PC-9 (cell line): ENCODE measurements at regions of chr3 and their contacts with region 1.

Region 1: DNA sequence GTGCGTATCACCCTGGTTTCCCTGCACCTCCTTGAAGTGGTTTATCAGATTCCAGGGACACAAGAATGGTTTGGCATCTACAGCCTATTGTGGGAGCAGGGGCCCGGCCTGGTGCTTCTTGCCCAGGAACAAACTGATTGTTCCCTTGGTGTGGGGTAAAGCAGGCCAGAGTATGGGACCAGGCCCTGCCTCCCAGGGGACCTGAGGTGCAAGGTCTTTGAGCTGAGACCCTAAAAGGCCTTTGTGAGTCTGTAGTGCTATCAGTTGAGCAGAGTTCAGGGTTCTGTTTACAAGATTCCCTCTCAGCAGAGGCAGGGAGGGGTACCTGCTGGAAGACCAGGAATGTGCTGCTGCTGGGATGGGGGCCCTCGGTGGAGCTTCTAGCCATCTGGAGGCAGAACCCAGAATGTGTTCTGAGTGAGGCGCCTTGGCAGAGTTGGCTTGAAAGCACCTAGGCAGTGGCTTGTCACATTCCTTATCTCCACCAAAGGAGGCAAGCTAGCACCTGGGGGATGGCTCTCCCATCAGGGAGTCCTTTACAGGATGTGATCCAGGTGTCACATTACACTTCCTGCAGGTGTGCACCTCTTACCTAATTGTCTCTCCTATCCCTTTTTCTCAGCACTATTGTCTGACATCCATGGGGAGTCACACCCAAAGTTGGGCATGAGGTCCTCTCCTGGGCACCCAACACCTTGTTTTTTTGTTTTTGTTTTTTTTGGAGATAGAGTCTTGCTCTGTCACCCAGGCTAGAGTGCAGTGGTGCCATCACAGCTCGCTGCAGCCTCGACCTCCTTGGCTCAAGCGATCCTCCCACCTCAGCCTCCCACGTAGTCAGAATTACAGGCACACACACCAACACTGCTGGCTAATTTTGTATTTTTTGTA is 13.1 kb downstream of the FLNB start:
- DNase-seq: peak; percentile 77 to 92
- H3K4me3 ChIP-seq: no peak overlapping the region
- H3K27ac ChIP-seq: peak overlapping the region; percentile 51
- H3K4me1 ChIP-seq: peaks cover 71% of the 10 kb centered on the region
- H3K27me3 ChIP-seq: no peaks in the 10 kb centered on the region
- CTCF ChIP-seq: no peak; the same call in 1 of the 2 replicates

Region 2: DNA sequence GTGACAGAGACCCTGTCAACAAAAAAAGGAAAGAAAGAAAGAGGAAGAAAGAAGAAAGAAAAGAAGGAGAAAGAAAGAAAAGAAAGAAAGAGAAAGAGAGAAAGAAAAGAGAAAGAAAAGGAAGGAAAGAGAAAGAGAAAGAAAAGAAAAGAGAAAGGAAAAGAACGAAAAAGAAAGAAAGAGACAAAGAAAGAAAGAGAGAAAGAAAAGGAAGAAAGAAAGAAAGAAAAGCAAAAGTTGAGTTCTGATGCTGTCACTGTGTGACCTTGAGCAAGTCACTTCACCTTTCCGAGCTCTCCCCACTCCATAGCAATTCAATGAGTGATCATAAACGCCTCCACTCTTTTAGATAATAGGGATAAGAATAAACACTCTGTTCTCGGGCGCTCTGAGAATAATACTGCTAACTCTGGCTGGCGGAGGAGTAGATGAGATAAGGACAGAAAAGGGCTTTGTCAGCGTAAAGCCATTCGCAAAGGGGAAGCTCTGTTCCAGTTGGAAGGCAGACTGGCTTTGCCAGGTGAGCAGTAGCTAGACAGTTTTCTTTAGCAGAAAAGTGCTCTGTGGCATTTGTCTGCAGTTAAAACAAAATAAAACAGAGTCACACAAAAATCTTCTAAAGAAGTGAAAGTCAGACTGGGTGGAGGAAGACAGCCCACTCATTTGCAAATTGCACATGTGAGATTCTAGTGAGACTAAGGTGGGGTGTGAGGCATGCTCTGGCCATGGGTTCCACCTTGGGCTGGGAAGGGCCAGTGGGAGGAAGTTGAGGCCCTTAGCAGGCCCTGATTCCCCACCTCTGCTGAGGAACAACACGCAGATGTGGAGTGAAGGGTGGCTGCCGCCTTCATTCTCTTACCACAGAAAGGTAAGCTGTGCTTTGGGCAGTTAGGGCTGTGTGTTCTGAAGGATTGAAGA is 22.7 kb before region 1 on chr3:
- CTCF ChIA-PET with region 1: no interaction called
- POLR2A ChIA-PET with region 1: no interaction called
- intact Hi-C with region 1: no loop called
- DNase-seq: peak in 1 of 2 experiments; percentile 33
- H3K4me3 ChIP-seq: no peak overlapping the region
- H3K27ac ChIP-seq: peak overlapping the region; percentile 93
- H3K4me1 ChIP-seq: peaks cover 46% of the 10 kb centered on the region
- H3K27me3 ChIP-seq: no peaks in the 10 kb centered on the region
- CTCF ChIP-seq: no peak

Region 3: GRCh38 chr3:58093573-58094195 is 72.4 kb after region 1 on chr3:
- CTCF ChIA-PET with region 1: no interaction called
- POLR2A ChIA-PET with region 1: interaction called, 5 read pairs
- intact Hi-C with region 1: loop called (anchors 1 kb)
- DNase-seq: peak; percentile 67 to 94
- H3K4me3 ChIP-seq: no peak overlapping the region
- H3K27ac ChIP-seq: peak overlapping the region; percentile 62
- H3K4me1 ChIP-seq: peaks cover 7% of the 10 kb centered on the region; the same call in 1 of the 2 replicates
- H3K27me3 ChIP-seq: no peaks in the 10 kb centered on the region
- CTCF ChIP-seq: no peak

Region 4: GRCh38 chr3:58792921-58793451 is 771.7 kb after region 1 on chr3:
- CTCF ChIA-PET with region 1: no interaction called
- POLR2A ChIA-PET with region 1: no interaction called
- intact Hi-C with region 1: no loop called
- DNase-seq: no peak
- H3K4me3 ChIP-seq: no peak overlapping the region
- H3K27ac ChIP-seq: no peak overlapping the region
- H3K4me1 ChIP-seq: no peaks in the 10 kb centered on the region
- H3K27me3 ChIP-seq: no peaks in the 10 kb centered on the region
- CTCF ChIP-seq: no peak